CD4-positive, alpha-beta memory T cell (primary cell): ENCODE measurements at regions of chr15 and their contacts with region 1.

Region 1: DNA sequence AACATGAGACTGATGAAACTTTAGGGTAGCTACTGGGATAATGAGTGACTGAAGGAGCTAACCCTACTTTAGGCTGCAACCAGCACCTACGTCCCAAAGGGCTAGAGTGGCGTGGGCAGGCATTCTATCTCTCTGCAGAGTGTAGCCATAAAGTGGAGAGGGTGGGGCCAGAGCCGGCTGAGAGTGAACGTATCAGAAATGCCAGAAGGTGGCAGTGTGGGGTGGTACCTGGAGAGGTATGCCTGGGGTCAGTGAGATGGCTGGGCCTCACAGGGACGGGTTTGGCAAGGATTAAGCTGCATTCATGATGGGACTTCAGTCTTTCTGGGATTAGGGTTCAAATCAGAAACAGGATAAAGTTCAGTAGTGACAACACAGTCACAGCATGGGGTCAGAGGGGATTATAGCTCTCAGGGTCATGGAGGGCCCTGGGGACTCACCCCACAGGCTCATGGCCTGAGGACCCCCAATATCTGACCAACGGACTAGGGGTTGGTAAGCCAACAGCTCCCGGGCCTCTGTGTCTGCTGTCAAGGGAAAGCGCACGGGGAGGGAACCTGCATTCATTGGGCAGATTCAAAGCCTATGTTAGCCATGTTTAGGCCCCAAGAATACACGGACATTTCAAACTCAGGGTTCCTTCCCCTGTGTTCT is 86.5 kb upstream of the FOXB1 start:
- DNase-seq: peak; percentile 51 to 66 (median 61)
- H3K4me3 ChIP-seq: no peak overlapping the region
- H3K4me3 Mint-ChIP-seq: no peak overlapping the region
- H3K27ac ChIP-seq: no peak overlapping the region
- H3K27ac Mint-ChIP-seq: peak overlapping the region in 2 of 7 donors; percentile 19 to 64
- H3K4me1 ChIP-seq: peaks cover 20% of the 10 kb centered on the region
- H3K4me1 Mint-ChIP-seq: peaks cover 12 to 25% (median 14%) of the 10 kb centered on the region in 4 donors
- H3K27me3 ChIP-seq: no peaks in the 10 kb centered on the region
- H3K27me3 Mint-ChIP-seq: peaks cover 5 to 7% of the 10 kb centered on the region in 2 donors

Region 2: GRCh38 chr15:59656897-59657634 is 260.6 kb before region 1 on chr15 and contains the start of gene GTF2A2:
- CTCF ChIA-PET with region 1: no interaction called
- POLR2A ChIA-PET with region 1: no interaction called
- intact Hi-C with region 1: no loop called
- DNase-seq: peak; percentile 90 to 95 (median 91)
- H3K4me3 ChIP-seq: peak within 1 kb of the TSS; percentile 71 to 76
- H3K4me3 Mint-ChIP-seq: peak within 1 kb of the TSS in 7 of 8 donors; percentile 6 to 62 (median 53)
- H3K27ac ChIP-seq: peak within 1 kb of the TSS; percentile 79
- H3K27ac Mint-ChIP-seq: peak within 1 kb of the TSS in 4 of 7 donors; percentile 28 to 89 (median 51)
- H3K4me1 ChIP-seq: peaks cover 29% of the 10 kb centered on the region
- H3K4me1 Mint-ChIP-seq: peaks cover 10 to 16% (median 13%) of the 10 kb centered on the region in 4 donors
- H3K27me3 ChIP-seq: no peaks in the 10 kb centered on the region
- H3K27me3 Mint-ChIP-seq: no peaks in the 10 kb centered on the region
- total RNA-seq, gene GTF2A2: 58.5 to 64.6 TPM

Region 3: GRCh38 chr15:59904450-59905135 is 13.0 kb before region 1 on chr15:
- CTCF ChIA-PET with region 1: interaction called, 10 read pairs
- POLR2A ChIA-PET with region 1: no interaction called
- intact Hi-C with region 1: no loop called
- DNase-seq: no peak
- H3K4me3 ChIP-seq: no peak overlapping the region
- H3K4me3 Mint-ChIP-seq: no peak overlapping the region
- H3K27ac ChIP-seq: no peak overlapping the region
- H3K27ac Mint-ChIP-seq: no peak overlapping the region
- H3K4me1 ChIP-seq: no peaks in the 10 kb centered on the region
- H3K4me1 Mint-ChIP-seq: peaks cover 0 to 1% (median 0%) of the 10 kb centered on the region in 4 donors
- H3K27me3 ChIP-seq: peaks cover 5% of the 10 kb centered on the region
- H3K27me3 Mint-ChIP-seq: peaks cover 19 to 21% of the 10 kb centered on the region in 2 donors

Region 4: GRCh38 chr15:59931646-59932261 is 14.1 kb after region 1 on chr15:
- CTCF ChIA-PET with region 1: interaction called, 11 read pairs
- POLR2A ChIA-PET with region 1: no interaction called
- intact Hi-C with region 1: no loop called
- DNase-seq: no peak
- H3K4me3 ChIP-seq: no peak overlapping the region
- H3K4me3 Mint-ChIP-seq: no peak overlapping the region
- H3K27ac ChIP-seq: no peak overlapping the region
- H3K27ac Mint-ChIP-seq: no peak overlapping the region
- H3K4me1 ChIP-seq: no peaks in the 10 kb centered on the region
- H3K4me1 Mint-ChIP-seq: no peaks in the 10 kb centered on the region
- H3K27me3 ChIP-seq: no peaks in the 10 kb centered on the region
- H3K27me3 Mint-ChIP-seq: peaks cover 14 to 23% of the 10 kb centered on the region in 2 donors

Region 5: DNA sequence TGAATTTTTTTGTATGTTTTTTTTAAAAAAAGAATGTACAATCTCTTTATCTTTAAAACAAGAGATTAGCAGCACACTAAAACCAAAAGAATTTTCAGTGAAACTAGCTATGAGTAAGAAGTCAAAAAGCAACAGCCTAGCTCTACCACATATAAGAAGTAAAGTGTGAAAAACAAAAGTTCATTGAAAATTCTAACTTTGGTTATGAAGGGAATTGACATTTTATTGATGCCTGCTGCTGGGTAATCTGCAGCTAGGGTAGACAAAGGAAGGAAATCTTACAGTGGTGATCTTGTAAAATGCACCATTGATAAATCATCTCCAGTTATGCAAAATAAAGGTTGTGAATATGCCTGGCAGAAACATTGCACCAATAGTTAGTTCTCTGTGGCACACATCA is 48.6 kb after region 1 on chr15:
- CTCF ChIA-PET with region 1: no interaction called
- POLR2A ChIA-PET with region 1: no interaction called
- intact Hi-C with region 1: no loop called
- DNase-seq: no peak
- H3K4me3 ChIP-seq: no peak overlapping the region
- H3K4me3 Mint-ChIP-seq: no peak overlapping the region
- H3K27ac ChIP-seq: no peak overlapping the region
- H3K27ac Mint-ChIP-seq: no peak overlapping the region
- H3K4me1 ChIP-seq: no peaks in the 10 kb centered on the region
- H3K4me1 Mint-ChIP-seq: no peaks in the 10 kb centered on the region
- H3K27me3 ChIP-seq: no peaks in the 10 kb centered on the region
- H3K27me3 Mint-ChIP-seq: peaks cover 3 to 8% of the 10 kb centered on the region in 2 donors

Region 6: GRCh38 chr15:60128000-60128376 is 210.4 kb after region 1 on chr15:
- CTCF ChIA-PET with region 1: interaction called, 59 read pairs
- POLR2A ChIA-PET with region 1: interaction called, 3 read pairs
- intact Hi-C with region 1: loop called (anchors 1 kb)
- DNase-seq: no peak
- H3K4me3 ChIP-seq: peak overlapping the region; percentile 56 to 81
- H3K4me3 Mint-ChIP-seq: peak overlapping the region; percentile 74 to 94 (median 92)
- H3K27ac ChIP-seq: peak overlapping the region; percentile 58
- H3K27ac Mint-ChIP-seq: peak overlapping the region; percentile 92 to 97 (median 96)
- H3K4me1 ChIP-seq: peaks cover 28% of the 10 kb centered on the region
- H3K4me1 Mint-ChIP-seq: peaks cover 19 to 45% (median 33%) of the 10 kb centered on the region in 4 donors
- H3K27me3 ChIP-seq: no peaks in the 10 kb centered on the region
- H3K27me3 Mint-ChIP-seq: no peaks in the 10 kb centered on the region

Region 7: GRCh38 chr15:60179786-60180391 is 262.3 kb after region 1 on chr15:
- CTCF ChIA-PET with region 1: interaction called, 76 read pairs
- POLR2A ChIA-PET with region 1: no interaction called
- intact Hi-C with region 1: loop called (anchors 1 kb)
- DNase-seq: peak; percentile 35 to 51 (median 45)
- H3K4me3 ChIP-seq: no peak overlapping the region
- H3K4me3 Mint-ChIP-seq: no peak overlapping the region
- H3K27ac ChIP-seq: no peak overlapping the region
- H3K27ac Mint-ChIP-seq: no peak overlapping the region
- H3K4me1 ChIP-seq: no peaks in the 10 kb centered on the region
- H3K4me1 Mint-ChIP-seq: no peaks in the 10 kb centered on the region
- H3K27me3 ChIP-seq: no peaks in the 10 kb centered on the region
- H3K27me3 Mint-ChIP-seq: peaks cover 8 to 18% of the 10 kb centered on the region in 2 donors

Region 8: DNA sequence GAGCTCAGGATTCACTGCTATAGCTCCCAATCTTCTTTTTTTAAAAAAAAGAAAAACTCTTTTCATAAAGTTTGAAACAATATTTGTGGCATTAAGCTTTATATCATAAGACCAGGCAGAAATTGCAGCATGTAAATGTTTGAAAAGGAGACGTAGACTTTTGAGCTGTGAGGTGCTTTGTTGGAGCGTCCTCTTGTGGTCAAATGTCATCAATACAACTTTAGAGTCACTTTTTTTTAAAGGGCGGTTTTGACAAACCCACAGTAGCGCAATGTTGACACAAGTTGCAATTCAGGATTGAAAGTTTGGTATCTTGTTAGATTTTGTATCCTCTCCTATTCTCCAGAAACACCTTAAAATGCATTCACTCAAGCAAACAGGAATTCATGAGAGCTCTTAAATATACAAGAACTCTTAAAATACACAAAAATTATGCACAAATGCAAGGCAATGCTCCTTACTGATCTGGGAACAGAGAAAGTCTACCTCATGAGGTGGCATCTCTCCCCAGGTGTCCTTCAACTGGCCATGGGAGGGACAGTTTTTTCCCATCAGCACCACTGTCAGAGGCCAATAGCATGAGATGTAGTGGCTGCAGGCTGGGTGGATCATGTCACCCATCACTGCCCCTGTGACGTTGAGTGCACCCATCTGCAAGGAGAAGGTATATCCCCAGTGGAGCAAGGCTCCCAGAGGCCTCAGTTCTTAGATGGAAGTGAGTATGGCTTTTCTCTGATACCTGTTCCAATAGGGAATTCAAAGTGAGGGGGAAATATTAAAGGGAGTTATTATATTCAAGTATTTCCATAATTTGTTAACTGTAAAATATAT is 409.4 kb after region 1 on chr15:
- CTCF ChIA-PET with region 1: interaction called, 19 read pairs
- POLR2A ChIA-PET with region 1: no interaction called
- intact Hi-C with region 1: loop called (anchors 1 kb)
- DNase-seq: peak in 4 of 5 donors; percentile 55 to 58 (median 57)
- H3K4me3 ChIP-seq: no peak overlapping the region
- H3K4me3 Mint-ChIP-seq: no peak overlapping the region
- H3K27ac ChIP-seq: no peak overlapping the region
- H3K27ac Mint-ChIP-seq: no peak overlapping the region
- H3K4me1 ChIP-seq: no peaks in the 10 kb centered on the region
- H3K4me1 Mint-ChIP-seq: peaks cover 2 to 7% (median 6%) of the 10 kb centered on the region in 4 donors
- H3K27me3 ChIP-seq: peaks cover 23% of the 10 kb centered on the region
- H3K27me3 Mint-ChIP-seq: peaks cover 18 to 27% of the 10 kb centered on the region in 2 donors

Region 9: GRCh38 chr15:60932051-60932915 is 1014.7 kb after region 1 on chr15:
- CTCF ChIA-PET with region 1: interaction called, 3 read pairs
- POLR2A ChIA-PET with region 1: no interaction called
- intact Hi-C with region 1: loop called (anchors 5 kb)
- DNase-seq: peak; percentile 52 to 86 (median 61)
- H3K4me3 ChIP-seq: no peak overlapping the region
- H3K4me3 Mint-ChIP-seq: peak overlapping the region in 6 of 8 donors; percentile 5 to 65 (median 31)
- H3K27ac ChIP-seq: no peak overlapping the region
- H3K27ac Mint-ChIP-seq: peak overlapping the region in 4 of 7 donors; percentile 8 to 57 (median 55)
- H3K4me1 ChIP-seq: peaks cover 14% of the 10 kb centered on the region
- H3K4me1 Mint-ChIP-seq: peaks cover 9 to 25% (median 14%) of the 10 kb centered on the region in 4 donors
- H3K27me3 ChIP-seq: no peaks in the 10 kb centered on the region
- H3K27me3 Mint-ChIP-seq: no peaks in the 10 kb centered on the region